Mammary epithelial cell (primary cell): ENCODE measurements at regions of chr13 and their contacts with region 1.

Region 1: GRCh38 chr13:36282818-36283445 is 14.7 kb downstream of the CCDC169 start:
- DNase-seq: peak; percentile 24
- H3K4me3 ChIP-seq: no peak overlapping the region
- H3K27ac ChIP-seq: no peak overlapping the region
- H3K4me1 ChIP-seq: no peaks in the 10 kb centered on the region
- H3K27me3 ChIP-seq: no peaks in the 10 kb centered on the region
- CTCF ChIP-seq: peak; percentile 81 to 90

Region 2: DNA sequence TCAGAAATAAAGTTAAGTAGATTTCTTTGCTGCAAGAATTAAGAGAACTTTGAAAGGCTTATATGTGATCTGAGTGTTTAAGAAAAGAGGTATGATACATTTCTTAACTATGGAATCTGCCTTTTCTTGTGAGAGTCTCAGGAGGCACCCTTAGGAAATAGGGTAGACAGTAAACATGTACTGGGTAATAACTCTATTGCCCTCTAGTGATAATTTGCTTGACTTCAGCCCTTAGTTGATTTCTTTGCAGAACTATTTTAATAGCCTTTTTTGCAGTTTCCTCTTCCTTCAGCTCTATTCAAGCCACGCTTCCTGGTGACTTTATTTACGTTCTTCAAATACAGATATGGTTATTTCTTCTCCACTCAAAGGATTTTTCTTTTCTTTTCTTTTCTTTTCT is 112.3 kb after region 1 on chr13:
- CTCF ChIA-PET with region 1: no interaction called
- dilution Hi-C with region 1: no loop called
- in situ Hi-C with region 1: no loop called
- intact Hi-C with region 1: loop called (anchors 1 kb)
- DNase-seq: peak; percentile 20
- H3K4me3 ChIP-seq: no peak overlapping the region
- H3K27ac ChIP-seq: no peak overlapping the region
- H3K4me1 ChIP-seq: no peaks in the 10 kb centered on the region
- H3K27me3 ChIP-seq: no peaks in the 10 kb centered on the region
- CTCF ChIP-seq: peak; percentile 40 to 54

Region 3: GRCh38 chr13:36475468-36475867 is 192.5 kb after region 1 on chr13:
- CTCF ChIA-PET with region 1: interaction called, 3 read pairs
- dilution Hi-C with region 1: no loop called
- in situ Hi-C with region 1: no loop called
- intact Hi-C with region 1: loop called (anchors 1 kb)
- DNase-seq: peak; percentile 45
- H3K4me3 ChIP-seq: no peak overlapping the region
- H3K27ac ChIP-seq: no peak overlapping the region
- H3K4me1 ChIP-seq: no peaks in the 10 kb centered on the region
- H3K27me3 ChIP-seq: no peaks in the 10 kb centered on the region
- CTCF ChIP-seq: peak; percentile 58 to 63

Region 4: DNA sequence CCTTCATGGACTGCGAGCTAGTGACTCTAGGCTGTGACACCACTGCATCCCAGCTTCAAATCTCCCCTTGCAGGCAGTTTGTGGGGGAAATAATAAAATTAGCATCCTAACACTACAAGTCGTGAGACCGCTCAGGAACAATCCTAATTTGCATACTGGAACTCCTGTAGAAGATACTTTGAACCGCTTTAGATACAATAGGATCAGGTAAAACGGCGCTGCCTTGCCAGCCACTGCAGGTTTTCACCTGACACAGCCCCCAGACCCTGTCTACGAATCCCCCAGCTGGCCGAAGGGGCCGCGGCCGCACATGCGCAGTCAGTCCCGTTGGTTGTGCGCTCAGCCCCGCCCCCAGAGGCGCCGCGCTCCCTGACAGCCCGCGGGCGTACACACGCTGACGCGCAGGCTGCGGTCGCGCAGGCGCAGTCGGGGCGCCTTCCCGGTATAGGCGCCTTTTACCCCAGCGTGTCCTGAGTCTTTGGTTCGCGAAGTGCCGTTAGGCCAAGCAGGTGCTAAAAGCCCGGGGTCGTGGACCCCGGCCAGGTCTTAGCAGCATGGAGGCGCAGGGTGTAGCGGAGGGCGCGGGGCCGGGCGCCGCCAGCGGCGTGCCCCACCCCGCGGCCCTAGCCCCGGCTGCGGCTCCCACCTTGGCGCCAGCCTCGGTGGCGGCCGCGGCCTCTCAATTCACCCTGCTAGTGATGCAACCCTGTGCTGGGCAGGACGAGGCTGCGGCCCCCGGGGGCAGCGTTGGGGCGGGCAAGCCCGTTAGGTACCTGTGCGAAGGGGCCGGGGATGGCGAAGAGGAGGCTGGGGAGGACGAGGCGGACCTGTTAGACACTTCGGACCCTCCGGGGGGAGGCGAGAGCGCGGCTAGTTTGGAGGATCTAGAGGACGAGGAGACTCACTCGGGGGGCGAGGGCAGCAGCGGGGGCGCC is 536.1 kb after region 1 on chr13 and contains the start of gene RFXAP:
- CTCF ChIA-PET with region 1: interaction called, 6 read pairs
- dilution Hi-C with region 1: no loop called
- in situ Hi-C with region 1: no loop called
- intact Hi-C with region 1: loop called (anchors 10 kb)
- DNase-seq: peak; percentile 75
- H3K4me3 ChIP-seq: peak within 1 kb of the TSS; percentile 71 to 90 (median 76)
- H3K27ac ChIP-seq: peak within 1 kb of the TSS; percentile 32
- H3K4me1 ChIP-seq: peaks cover 16% of the 10 kb centered on the region
- H3K27me3 ChIP-seq: no peaks in the 10 kb centered on the region
- CTCF ChIP-seq: no peak
- total RNA-seq, gene RFXAP: 3.3 to 4.4 TPM

Region 5: GRCh38 chr13:36999054-36999714 is 716.3 kb after region 1 on chr13 and contains the start of gene ALG5:
- CTCF ChIA-PET with region 1: no interaction called
- dilution Hi-C with region 1: no loop called
- in situ Hi-C with region 1: no loop called
- intact Hi-C with region 1: loop called (anchors 10 kb)
- DNase-seq: peak; percentile 83
- H3K4me3 ChIP-seq: peak within 1 kb of the TSS; percentile 76 to 93 (median 90)
- H3K27ac ChIP-seq: peak within 1 kb of the TSS; percentile 97
- H3K4me1 ChIP-seq: peaks cover 7% of the 10 kb centered on the region
- H3K27me3 ChIP-seq: no peaks in the 10 kb centered on the region
- CTCF ChIP-seq: peak; percentile 70 to 82
- total RNA-seq, gene ALG5: 27.7 to 37.5 TPM